ENCODE measurements at regions of chr2 and their contacts with region 1.

Region 1: DNA sequence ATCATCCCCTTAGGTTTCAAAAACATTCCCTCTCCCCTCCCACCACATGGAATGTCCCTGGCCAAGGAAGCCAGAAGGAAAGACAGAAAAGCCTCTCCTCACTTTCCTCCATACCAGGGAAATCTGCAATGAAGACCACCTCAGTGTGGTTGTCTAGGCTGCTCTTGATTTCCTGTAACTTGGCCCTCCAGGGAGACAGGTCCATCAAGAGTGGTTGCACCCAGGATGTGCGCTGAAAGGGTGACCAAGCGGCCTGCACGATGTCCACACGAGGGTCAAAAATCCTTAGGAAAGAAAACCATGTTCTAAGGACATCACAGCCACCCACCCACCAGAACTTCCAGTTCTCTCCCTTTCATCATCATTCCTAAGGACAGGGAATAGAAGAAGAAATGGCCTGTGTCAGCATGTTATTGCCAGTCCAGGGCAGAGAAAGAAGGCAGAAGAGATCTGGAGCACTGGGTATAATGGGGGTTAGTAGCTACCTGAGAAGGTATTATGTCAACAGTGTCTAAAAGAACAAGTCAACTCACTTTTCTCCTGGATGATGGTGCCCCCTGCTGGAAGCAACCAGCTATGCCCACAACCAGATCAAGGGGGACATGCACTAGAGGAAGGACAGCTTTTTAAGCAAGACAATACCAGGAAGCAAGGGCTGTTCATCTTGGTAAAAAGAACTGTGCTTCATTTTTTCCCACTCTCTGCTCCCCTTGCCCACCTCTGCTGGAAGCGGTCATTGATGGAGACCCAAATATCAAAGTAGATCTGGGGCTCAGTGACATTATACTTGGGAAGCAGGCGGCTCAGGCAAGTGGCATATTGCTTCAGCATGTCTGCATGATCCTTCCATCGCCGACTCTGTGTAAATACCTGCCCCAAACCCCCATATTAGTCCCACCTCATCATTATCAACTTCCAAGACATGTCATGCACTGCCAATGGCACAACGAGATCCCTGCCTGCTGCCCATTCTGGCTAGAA is 9.3 kb downstream of the GGCX start:
- DNase-seq: peak; percentile 79 to 86
- ATAC-seq: peak; percentile 31 to 80 (median 64)
- H3K4me3 ChIP-seq: no peak overlapping the region
- H3K27ac ChIP-seq: peak overlapping the region; percentile 10
- H3K4me1 ChIP-seq: peaks cover 17% of the 10 kb centered on the region
- H3K27me3 ChIP-seq: no peaks in the 10 kb centered on the region
- CTCF ChIP-seq: peak; percentile 92

Region 2: DNA sequence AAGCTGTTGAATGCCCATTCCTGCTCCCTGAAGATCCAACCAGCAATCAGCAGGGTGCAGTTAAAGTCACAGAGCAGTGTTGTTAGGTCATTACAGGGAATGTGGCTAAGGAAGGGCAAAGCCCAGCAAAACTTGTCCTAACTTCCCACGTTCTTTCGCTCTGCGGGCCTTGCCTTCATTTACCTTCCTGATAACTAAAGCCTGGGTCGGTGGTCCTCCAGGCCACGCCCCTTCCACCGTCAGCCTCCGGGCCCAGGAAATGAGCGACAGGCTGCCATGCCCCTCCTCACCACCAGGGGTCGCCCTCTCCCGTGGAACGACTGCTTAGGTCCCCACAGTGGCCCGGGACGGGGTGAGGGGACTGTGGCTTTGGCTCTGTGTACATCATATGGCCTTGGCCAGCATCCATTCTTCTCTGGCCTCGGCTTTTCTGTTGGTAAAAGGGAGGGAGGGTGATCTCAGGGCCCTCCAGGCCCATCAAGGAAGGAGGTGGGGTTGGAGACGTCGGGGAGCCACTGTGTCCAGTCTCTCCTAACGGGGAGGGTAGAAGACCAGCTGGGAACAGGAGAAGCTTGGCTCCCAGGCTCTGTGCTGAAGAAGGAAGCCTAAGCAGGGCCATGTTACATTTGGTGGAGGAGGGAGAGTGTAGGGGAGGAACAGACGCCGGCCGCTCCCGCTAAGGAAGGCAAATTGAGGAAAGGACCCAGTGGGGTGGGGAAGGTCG is 131.3 kb before region 1 on chr2:
- intact Hi-C with region 1: loop called (anchors 1 to 2 kb)
- DNase-seq: peak; percentile 90 to 94
- ATAC-seq: peak; percentile 77 to 82 (median 81)
- H3K4me3 ChIP-seq: peak overlapping the region; percentile 29
- H3K27ac ChIP-seq: peak overlapping the region; percentile 93
- H3K4me1 ChIP-seq: peaks cover 14% of the 10 kb centered on the region
- H3K27me3 ChIP-seq: no peaks in the 10 kb centered on the region
- CTCF ChIP-seq: peak; percentile 100